Ovary (tissue), 10 donors: ENCODE measurements at regions of chr3 and their contacts with region 1.

Region 1: GRCh38 chr3:42749753-42750231 is 23.3 kb downstream of the CCDC13 start:
- DNase-seq: no peak
- H3K4me3 ChIP-seq: no peak overlapping the region
- H3K27ac ChIP-seq: no peak overlapping the region
- H3K4me1 ChIP-seq: peaks cover 9% of the 10 kb centered on the region
- H3K27me3 ChIP-seq: no peaks in the 10 kb centered on the region
- CTCF ChIP-seq: no peak
- EP300 ChIP-seq: no peak
- POLR2A ChIP-seq: no peak

Region 2: GRCh38 chr3:42581709-42582473 is 167.9 kb before region 1 on chr3 and contains the start of gene SEC22C:
- intact Hi-C with region 1: loop called in 1 of 4 experiments (anchors 10 kb)
- DNase-seq: peak; percentile 94 to 96 (median 95)
- H3K4me3 ChIP-seq: peak within 1 kb of the TSS; percentile 98
- H3K27ac ChIP-seq: peak within 1 kb of the TSS; percentile 82 to 83
- H3K4me1 ChIP-seq: peaks cover 3% of the 10 kb centered on the region
- H3K27me3 ChIP-seq: no peaks in the 10 kb centered on the region
- CTCF ChIP-seq: no peak
- EP300 ChIP-seq: no peak
- POLR2A ChIP-seq: peak; percentile 85
- total RNA-seq, gene SEC22C: 33.7 to 68.5 (median 46.0) TPM

Region 3: GRCh38 chr3:42652611-42653302 is 97.0 kb before region 1 on chr3:
- intact Hi-C with region 1: loop called in 1 of 4 experiments (anchors 10 kb)
- DNase-seq: peak; percentile 59 to 70 (median 65)
- H3K4me3 ChIP-seq: peak overlapping the region; percentile 88
- H3K27ac ChIP-seq: peak overlapping the region; percentile 95 to 98
- H3K4me1 ChIP-seq: peaks cover 16% of the 10 kb centered on the region
- H3K27me3 ChIP-seq: no peaks in the 10 kb centered on the region
- CTCF ChIP-seq: no peak
- EP300 ChIP-seq: no peak
- POLR2A ChIP-seq: peak; percentile 36